Psoas muscle (tissue), 8 donors: ENCODE measurements at regions of chr9 and their contacts with region 1.

Region 1: GRCh38 chr9:107749787-107750444 is 260.3 kb upstream of the KLF4 start:
- DNase-seq: peak; percentile 93 to 95
- ATAC-seq: peak; percentile 88 to 94 (median 90)
- H3K4me3 ChIP-seq: no peak overlapping the region
- H3K27ac ChIP-seq: peak overlapping the region; percentile 94
- H3K4me1 ChIP-seq: peaks cover 26% of the 10 kb centered on the region
- H3K27me3 ChIP-seq: no peaks in the 10 kb centered on the region
- CTCF ChIP-seq: no peak

Region 2: GRCh38 chr9:107637421-107638420 is 112.2 kb before region 1 on chr9:
- intact Hi-C with region 1: loop called in 1 of 2 experiments (anchors 2 kb)
- DNase-seq: peak; percentile 90 to 93
- ATAC-seq: peak; percentile 89 to 93 (median 92)
- H3K4me3 ChIP-seq: peak overlapping the region; percentile 65
- H3K27ac ChIP-seq: peak overlapping the region; percentile 96
- H3K4me1 ChIP-seq: peaks cover 17% of the 10 kb centered on the region
- H3K27me3 ChIP-seq: no peaks in the 10 kb centered on the region
- CTCF ChIP-seq: peak; percentile 32

Region 3: GRCh38 chr9:108053555-108054061 is 303.7 kb after region 1 on chr9:
- intact Hi-C with region 1: loop called in 1 of 2 experiments (anchors 10 kb)
- DNase-seq: peak; percentile 72 to 78
- ATAC-seq: peak; percentile 59 to 83 (median 66)
- H3K4me3 ChIP-seq: peak overlapping the region; percentile 43
- H3K27ac ChIP-seq: peak overlapping the region; percentile 48
- H3K4me1 ChIP-seq: peaks cover 42% of the 10 kb centered on the region
- H3K27me3 ChIP-seq: no peaks in the 10 kb centered on the region
- CTCF ChIP-seq: no peak

Region 4: DNA sequence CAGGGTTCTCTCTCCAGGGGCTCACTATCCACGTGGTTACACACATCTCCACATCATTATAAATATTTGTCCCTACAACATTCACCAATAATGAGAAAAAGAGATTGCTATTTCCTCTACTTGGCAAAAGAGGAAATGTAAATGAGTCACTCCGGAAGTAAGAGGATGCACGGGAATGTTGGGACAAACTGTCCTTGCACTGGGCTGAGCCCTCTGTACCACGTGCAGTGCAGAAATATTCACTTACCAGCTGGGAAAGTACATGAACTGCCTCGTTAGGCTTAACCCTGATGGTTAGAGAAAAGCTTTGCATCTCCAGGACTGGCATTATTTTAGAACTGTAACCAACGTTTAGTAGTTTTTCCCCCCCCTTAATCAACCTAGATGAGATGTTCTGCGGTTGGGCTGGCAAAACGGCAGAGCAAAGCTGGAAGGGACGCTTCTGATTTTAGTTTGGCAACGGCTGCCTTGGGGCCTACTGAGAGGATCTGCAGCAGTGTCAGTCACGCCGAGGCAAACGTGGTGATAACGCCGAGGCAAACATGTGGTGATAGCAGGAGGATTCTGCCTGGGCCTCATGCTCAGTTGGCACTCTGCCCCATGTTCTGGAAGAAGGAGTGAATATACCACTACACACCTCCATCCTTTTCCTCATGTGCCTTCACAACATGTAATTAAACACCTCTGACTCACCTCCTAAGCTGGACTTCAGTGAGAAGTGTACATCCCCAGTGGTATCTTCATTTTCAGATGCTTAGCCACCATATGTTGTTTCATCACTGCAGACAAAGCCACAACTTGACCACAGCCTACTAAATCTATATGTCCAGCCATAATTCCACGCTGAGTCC is 401.0 kb after region 1 on chr9:
- intact Hi-C with region 1: loop called in 1 of 2 experiments (anchors 10 kb)
- DNase-seq: peak; percentile 27 to 58
- ATAC-seq: peak; percentile 32 to 89 (median 80)
- H3K4me3 ChIP-seq: no peak overlapping the region
- H3K27ac ChIP-seq: peak overlapping the region; percentile 21
- H3K4me1 ChIP-seq: peaks cover 10% of the 10 kb centered on the region
- H3K27me3 ChIP-seq: no peaks in the 10 kb centered on the region
- CTCF ChIP-seq: no peak